Activated CD4-positive, alpha-beta T cell treated with anti-CD3 and anti-CD28 coated beads, Interleukin-2, amount 10 ng/mL, durations not matched to agents 24 days and 14 days (primary cell): ENCODE measurements at regions of chr1 and their contacts with region 1.

Region 1: GRCh38 chr1:9823943-9824701 is at the start of gene CLSTN1:
- DNase-seq: peak; percentile 96
- H3K4me3 Mint-ChIP-seq: peak within 1 kb of the TSS; percentile 92
- H3K27ac Mint-ChIP-seq: peak within 1 kb of the TSS; percentile 82
- H3K4me1 Mint-ChIP-seq: peaks cover 35% of the 10 kb centered on the region
- H3K27me3 Mint-ChIP-seq: peaks cover 6% of the 10 kb centered on the region
- total RNA-seq, gene CLSTN1: 42.1 and 43.8 TPM in 2 replicates

Region 2: GRCh38 chr1:9340172-9340854 is 483.8 kb before region 1 on chr1:
- intact Hi-C with region 1: no loop called
- DNase-seq: no peak
- H3K4me3 Mint-ChIP-seq: no peak overlapping the region
- H3K27ac Mint-ChIP-seq: no peak overlapping the region
- H3K4me1 Mint-ChIP-seq: no peaks in the 10 kb centered on the region
- H3K27me3 Mint-ChIP-seq: no peaks in the 10 kb centered on the region

Region 3: DNA sequence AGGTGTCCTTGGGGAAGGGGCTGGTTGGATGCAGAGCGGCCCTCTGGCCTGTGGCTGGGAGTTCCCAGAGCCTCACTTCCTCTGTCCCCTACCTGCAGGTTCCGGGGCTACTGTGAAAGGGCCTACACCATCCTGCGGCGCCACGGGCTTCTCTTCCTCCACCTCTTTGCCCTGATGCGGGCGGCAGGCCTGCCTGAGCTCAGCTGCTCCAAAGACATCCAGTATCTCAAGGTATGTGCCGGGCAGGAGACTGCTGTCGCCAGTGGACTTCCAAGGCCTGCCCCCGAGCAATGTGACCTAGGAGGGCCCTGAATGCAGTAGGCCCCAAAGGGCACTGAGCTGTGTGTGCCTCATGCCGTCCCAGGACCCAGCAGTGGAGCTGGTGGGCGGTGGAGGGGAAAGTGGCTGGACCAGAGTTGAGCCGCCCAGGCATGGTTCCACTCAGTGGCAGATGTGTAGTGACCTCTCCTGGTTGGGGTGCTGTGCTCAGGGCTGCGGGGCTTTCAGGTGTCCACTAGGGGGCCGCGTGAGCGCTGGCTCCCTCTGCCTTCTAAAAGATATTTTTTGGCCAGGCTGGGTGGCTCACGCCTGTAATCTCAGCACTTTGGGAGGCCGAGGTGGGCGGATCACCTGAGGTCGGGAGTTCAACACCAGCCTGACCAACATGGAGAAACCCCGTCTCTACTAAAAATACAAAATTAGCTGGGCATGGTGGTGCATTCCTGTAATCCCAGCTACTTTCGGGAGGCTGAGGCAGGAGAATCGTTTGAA is 99.2 kb before region 1 on chr1:
- intact Hi-C with region 1: loop called (anchors 10 kb)
- DNase-seq: peak; percentile 91
- H3K4me3 Mint-ChIP-seq: peak overlapping the region; percentile 23
- H3K27ac Mint-ChIP-seq: peak overlapping the region; percentile 56
- H3K4me1 Mint-ChIP-seq: peaks cover 46% of the 10 kb centered on the region
- H3K27me3 Mint-ChIP-seq: no peaks in the 10 kb centered on the region

Region 4: GRCh38 chr1:9770298-9770697 is 53.8 kb before region 1 on chr1:
- intact Hi-C with region 1: no loop called
- DNase-seq: no peak
- H3K4me3 Mint-ChIP-seq: no peak overlapping the region
- H3K27ac Mint-ChIP-seq: no peak overlapping the region
- H3K4me1 Mint-ChIP-seq: peaks cover 4% of the 10 kb centered on the region
- H3K27me3 Mint-ChIP-seq: no peaks in the 10 kb centered on the region

Region 5: GRCh38 chr1:9784508-9785133 is 39.5 kb before region 1 on chr1:
- intact Hi-C with region 1: loop called (anchors 1 kb)
- DNase-seq: peak; percentile 90
- H3K4me3 Mint-ChIP-seq: no peak overlapping the region
- H3K27ac Mint-ChIP-seq: no peak overlapping the region
- H3K4me1 Mint-ChIP-seq: peaks cover 28% of the 10 kb centered on the region
- H3K27me3 Mint-ChIP-seq: no peaks in the 10 kb centered on the region

Region 6: GRCh38 chr1:9798236-9799130 is 25.6 kb before region 1 on chr1:
- intact Hi-C with region 1: loop called (anchors 2 kb)
- DNase-seq: no peak
- H3K4me3 Mint-ChIP-seq: peak overlapping the region; percentile 41
- H3K27ac Mint-ChIP-seq: peak overlapping the region; percentile 48
- H3K4me1 Mint-ChIP-seq: peaks cover 47% of the 10 kb centered on the region
- H3K27me3 Mint-ChIP-seq: no peaks in the 10 kb centered on the region

Region 7: GRCh38 chr1:9809100-9809510 is 15.0 kb before region 1 on chr1:
- intact Hi-C with region 1: no loop called
- DNase-seq: no peak
- H3K4me3 Mint-ChIP-seq: no peak overlapping the region
- H3K27ac Mint-ChIP-seq: no peak overlapping the region
- H3K4me1 Mint-ChIP-seq: peaks cover 28% of the 10 kb centered on the region
- H3K27me3 Mint-ChIP-seq: no peaks in the 10 kb centered on the region

Region 8: GRCh38 chr1:9867408-9868243 is 43.5 kb after region 1 on chr1:
- intact Hi-C with region 1: loop called (anchors 5 kb)
- DNase-seq: peak; percentile 96
- H3K4me3 Mint-ChIP-seq: no peak overlapping the region
- H3K27ac Mint-ChIP-seq: no peak overlapping the region
- H3K4me1 Mint-ChIP-seq: peaks cover 4% of the 10 kb centered on the region
- H3K27me3 Mint-ChIP-seq: peaks cover 2% of the 10 kb centered on the region

Region 9: DNA sequence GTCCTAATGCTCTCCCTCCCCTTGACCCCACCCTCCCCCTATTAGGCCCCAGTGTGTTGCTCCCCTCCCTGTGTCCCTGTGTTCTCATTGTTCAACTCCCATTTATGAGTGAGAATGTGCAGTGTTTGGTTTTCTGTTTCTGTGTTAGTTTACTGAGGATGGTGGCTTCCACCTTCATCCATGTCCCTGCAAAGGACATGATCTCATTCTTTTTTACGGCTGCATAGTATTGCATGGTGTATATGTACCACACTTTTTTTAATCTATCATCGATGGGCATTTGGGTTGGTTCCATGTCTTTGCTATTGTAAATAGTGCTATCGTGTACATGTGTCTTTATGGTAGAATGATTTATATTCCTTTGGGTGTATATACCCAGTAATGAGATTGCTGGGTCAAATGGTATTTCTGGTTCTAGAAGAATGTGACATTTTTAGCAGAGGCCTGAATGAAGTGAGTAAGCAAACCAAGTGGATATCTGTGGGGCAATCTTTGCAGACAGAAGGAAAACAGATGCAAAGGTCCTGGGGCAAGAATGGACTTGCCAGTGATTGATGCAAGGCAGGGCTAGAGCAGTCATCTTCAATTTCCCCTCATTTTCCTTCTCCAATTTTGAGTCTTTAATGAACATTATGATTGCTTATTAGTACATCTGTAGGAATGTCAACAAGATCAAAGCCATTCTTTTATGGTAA is 258.8 kb after region 1 on chr1:
- intact Hi-C with region 1: no loop called
- DNase-seq: no peak
- H3K4me3 Mint-ChIP-seq: no peak overlapping the region
- H3K27ac Mint-ChIP-seq: no peak overlapping the region
- H3K4me1 Mint-ChIP-seq: peaks cover 6% of the 10 kb centered on the region
- H3K27me3 Mint-ChIP-seq: no peaks in the 10 kb centered on the region

Region 10: GRCh38 chr1:10694633-10695627 is 870.8 kb after region 1 on chr1:
- intact Hi-C with region 1: loop called (anchors 10 kb)
- DNase-seq: peak; percentile 93
- H3K4me3 Mint-ChIP-seq: peak overlapping the region; percentile 84
- H3K27ac Mint-ChIP-seq: peak overlapping the region; percentile 77
- H3K4me1 Mint-ChIP-seq: peaks cover 26% of the 10 kb centered on the region
- H3K27me3 Mint-ChIP-seq: peaks cover 23% of the 10 kb centered on the region